GM12878 (cell line): ENCODE measurements at regions of chr5 and their contacts with region 1.

Region 1: GRCh38 chr5:143177263-143177983 is 226.1 kb downstream of the NR3C1 start:
- DNase-seq: no peak
- ATAC-seq: no peak
- H3K4me3 ChIP-seq: no peak overlapping the region
- H3K27ac ChIP-seq: no peak overlapping the region
- H3K4me1 ChIP-seq: peaks cover 8% of the 10 kb centered on the region
- H3K27me3 ChIP-seq: no peaks in the 10 kb centered on the region
- CTCF ChIP-seq: no peak
- EP300 ChIP-seq: no peak
- POLR2A ChIP-seq: no peak
- RAD21 ChIP-seq: no peak

Region 2: GRCh38 chr5:143113461-143113860 is 64.0 kb before region 1 on chr5:
- CTCF ChIA-PET with region 1: interaction called, 3 read pairs
- POLR2A ChIA-PET with region 1: interaction called, 3 read pairs
- RAD21 ChIA-PET with region 1: interaction called, 16 read pairs
- SMC1A ChIA-PET with region 1: interaction called, 18 read pairs
- in situ Hi-C with region 1: no loop called
- intact Hi-C with region 1: no loop called
- DNase-seq: no peak
- ATAC-seq: peak; percentile 18
- H3K4me3 ChIP-seq: no peak overlapping the region
- H3K27ac ChIP-seq: peak overlapping the region; percentile 21
- H3K4me1 ChIP-seq: peaks cover 23% of the 10 kb centered on the region
- H3K27me3 ChIP-seq: no peaks in the 10 kb centered on the region
- CTCF ChIP-seq: no peak
- EP300 ChIP-seq: no peak
- POLR2A ChIP-seq: no peak
- RAD21 ChIP-seq: no peak

Region 3: DNA sequence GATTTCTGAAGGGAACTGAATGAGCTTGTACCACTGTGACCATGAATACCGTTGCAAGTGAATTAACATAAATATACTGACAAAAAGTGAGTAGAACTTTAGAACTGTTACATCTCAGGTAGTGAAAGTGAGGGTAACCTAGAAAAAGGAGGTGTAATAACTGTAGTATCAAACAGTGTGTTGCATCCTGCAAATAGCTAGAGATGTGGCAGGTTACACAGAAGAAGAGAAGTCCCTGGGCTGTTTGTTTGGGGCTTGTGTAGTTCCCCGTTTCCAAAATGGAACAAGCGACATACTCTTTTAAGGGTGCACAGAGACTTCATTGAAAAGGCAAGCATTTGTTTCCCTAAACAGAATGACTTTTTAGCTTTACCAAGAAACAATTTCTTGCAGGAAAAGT is 11.3 kb after region 1 on chr5:
- CTCF ChIA-PET with region 1: interaction called, 12 read pairs
- POLR2A ChIA-PET with region 1: interaction called, 20 read pairs
- RAD21 ChIA-PET with region 1: interaction called, 43 read pairs
- SMC1A ChIA-PET with region 1: interaction called, 50 read pairs
- in situ Hi-C with region 1: no loop called
- intact Hi-C with region 1: no loop called
- DNase-seq: no peak
- ATAC-seq: peak; percentile 52
- H3K4me3 ChIP-seq: no peak overlapping the region
- H3K27ac ChIP-seq: peak overlapping the region; percentile 66
- H3K4me1 ChIP-seq: peaks cover 47% of the 10 kb centered on the region
- H3K27me3 ChIP-seq: no peaks in the 10 kb centered on the region
- CTCF ChIP-seq: no peak
- EP300 ChIP-seq: 0 out of 4 replicates have a peak, but pooled peaks of 1 of the 2 experiments have one; percentile 11
- POLR2A ChIP-seq: no peak
- RAD21 ChIP-seq: no peak

Region 4: GRCh38 chr5:143426437-143426991 is 249.1 kb after region 1 on chr5:
- CTCF ChIA-PET with region 1: no interaction called
- POLR2A ChIA-PET with region 1: no interaction called
- RAD21 ChIA-PET with region 1: no interaction called
- SMC1A ChIA-PET with region 1: no interaction called
- in situ Hi-C with region 1: no loop called
- intact Hi-C with region 1: no loop called
- DNase-seq: no peak
- ATAC-seq: peak; percentile 76
- H3K4me3 ChIP-seq: no peak overlapping the region
- H3K27ac ChIP-seq: peak overlapping the region; percentile 68
- H3K4me1 ChIP-seq: peaks cover 13% of the 10 kb centered on the region; the same call in 1 of the 2 replicates
- H3K27me3 ChIP-seq: no peaks in the 10 kb centered on the region
- CTCF ChIP-seq: no peak
- EP300 ChIP-seq: 0 out of 4 replicates have a peak, but pooled peaks of 1 of the 2 experiments have one; percentile 11
- POLR2A ChIP-seq: no peak
- RAD21 ChIP-seq: no peak